Endothelial cell of umbilical vein (primary cell): ENCODE measurements at regions of chr6 and their contacts with region 1.

Region 1: GRCh38 chr6:75296811-75297779 is 12.5 kb upstream of the TMEM30A start:
- DNase-seq: peak; percentile 85
- H3K4me3 ChIP-seq: no peak overlapping the region
- H3K27ac ChIP-seq: no peak overlapping the region
- H3K4me1 ChIP-seq: no peaks in the 10 kb centered on the region
- H3K27me3 ChIP-seq: no peaks in the 10 kb centered on the region
- CTCF ChIP-seq: peak; percentile 25 to 35
- POLR2A ChIP-seq: no peak

Region 2: GRCh38 chr6:75266716-75267291 is 30.3 kb before region 1 on chr6:
- CTCF ChIA-PET with region 1: interaction called, 25 read pairs
- POLR2A ChIA-PET with region 1: no interaction called
- dilution Hi-C with region 1: no loop called
- intact Hi-C with region 1: loop called (anchors 1 kb)
- DNase-seq: peak; percentile 75
- H3K4me3 ChIP-seq: no peak overlapping the region
- H3K27ac ChIP-seq: no peak overlapping the region
- H3K4me1 ChIP-seq: peaks cover 19% of the 10 kb centered on the region
- H3K27me3 ChIP-seq: no peaks in the 10 kb centered on the region
- CTCF ChIP-seq: peak; percentile 58 to 59
- POLR2A ChIP-seq: no peak

Region 3: DNA sequence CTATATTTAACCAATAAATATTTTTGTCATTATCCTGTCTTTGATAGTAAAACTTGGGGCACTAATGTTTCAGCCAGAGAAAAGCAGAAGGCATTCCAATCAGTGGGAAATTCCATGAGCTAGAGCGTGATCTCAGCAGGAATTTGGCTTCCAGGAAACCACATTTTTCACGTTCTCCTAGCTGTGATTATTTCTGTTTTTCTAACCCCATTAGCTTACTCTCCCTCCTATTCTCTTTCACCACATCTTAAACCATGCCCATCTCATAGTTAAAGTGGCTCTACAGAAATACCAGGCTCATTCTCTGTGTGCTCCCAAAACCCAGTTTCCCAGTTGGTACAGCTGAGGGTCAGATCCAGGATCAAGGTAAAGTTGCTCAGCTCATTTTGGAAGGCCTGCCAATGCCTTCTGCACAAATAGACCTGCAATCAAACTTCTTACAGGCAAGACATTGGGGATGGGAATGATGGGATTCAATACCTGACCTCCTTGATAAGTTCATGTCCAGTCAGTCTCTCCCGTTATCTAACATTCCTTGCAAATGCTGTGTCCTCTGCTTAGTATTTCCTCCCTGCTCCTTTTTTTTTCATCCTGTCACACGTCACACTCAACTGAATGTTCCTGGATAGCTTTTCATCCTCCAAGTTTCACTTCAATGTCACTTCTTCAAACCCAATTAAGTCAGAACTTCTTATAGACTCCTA is 20.6 kb after region 1 on chr6:
- CTCF ChIA-PET with region 1: interaction called, 13 read pairs
- POLR2A ChIA-PET with region 1: no interaction called
- dilution Hi-C with region 1: no loop called
- intact Hi-C with region 1: no loop called
- DNase-seq: peak; percentile 71
- H3K4me3 ChIP-seq: no peak overlapping the region
- H3K27ac ChIP-seq: peak overlapping the region; percentile 13
- H3K4me1 ChIP-seq: peaks cover 10% of the 10 kb centered on the region
- H3K27me3 ChIP-seq: peaks cover 0 to 11% of the 10 kb centered on the region in 2 experiments
- CTCF ChIP-seq: no peak
- POLR2A ChIP-seq: no peak

Region 4: DNA sequence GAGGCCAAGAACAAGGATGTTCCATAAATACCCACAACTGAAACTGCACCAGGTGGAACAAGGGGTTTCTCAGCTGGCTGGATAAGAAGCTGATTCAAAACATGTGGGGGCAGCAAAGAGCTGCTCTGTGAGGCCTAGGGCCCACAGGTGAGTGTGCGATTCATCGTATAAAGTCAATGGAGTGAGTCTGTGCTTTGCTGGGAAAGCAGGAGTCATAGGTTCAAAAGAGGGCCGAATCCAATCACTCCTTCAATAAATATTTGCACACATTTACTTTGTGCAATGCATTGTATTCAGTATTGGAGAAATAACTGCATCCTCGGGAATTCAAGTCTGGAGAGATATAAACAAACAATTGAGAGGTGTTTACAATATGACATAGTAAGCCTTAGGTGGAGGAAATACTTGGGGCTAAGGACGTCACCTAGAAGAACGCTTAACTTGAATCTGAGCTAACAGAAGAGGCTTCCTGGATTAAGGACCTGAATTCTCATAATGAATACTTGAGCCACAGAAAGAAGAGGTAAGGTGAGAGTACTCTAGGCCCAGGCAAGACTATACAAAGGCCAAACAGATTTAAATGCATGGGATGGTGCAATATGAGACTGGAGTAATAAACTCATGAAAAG is 71.2 kb after region 1 on chr6:
- CTCF ChIA-PET with region 1: interaction called, 9 read pairs
- POLR2A ChIA-PET with region 1: no interaction called
- dilution Hi-C with region 1: no loop called
- intact Hi-C with region 1: loop called (anchors 1 kb)
- DNase-seq: peak; percentile 78
- H3K4me3 ChIP-seq: no peak overlapping the region
- H3K27ac ChIP-seq: no peak overlapping the region
- H3K4me1 ChIP-seq: no peaks in the 10 kb centered on the region
- H3K27me3 ChIP-seq: no peaks in the 10 kb centered on the region
- CTCF ChIP-seq: peak; percentile 37 to 57
- POLR2A ChIP-seq: no peak

Region 5: GRCh38 chr6:75484535-75484934 is 187.4 kb after region 1 on chr6:
- CTCF ChIA-PET with region 1: interaction called, 4 read pairs
- POLR2A ChIA-PET with region 1: no interaction called
- dilution Hi-C with region 1: no loop called
- intact Hi-C with region 1: loop called (anchors 5 kb)
- DNase-seq: no peak
- H3K4me3 ChIP-seq: no peak overlapping the region
- H3K27ac ChIP-seq: no peak overlapping the region
- H3K4me1 ChIP-seq: peaks cover 36% of the 10 kb centered on the region
- H3K27me3 ChIP-seq: no peaks in the 10 kb centered on the region
- CTCF ChIP-seq: no peak
- POLR2A ChIP-seq: no peak

Region 6: GRCh38 chr6:75526502-75527127 is 229.5 kb after region 1 on chr6:
- CTCF ChIA-PET with region 1: interaction called, 51 read pairs
- POLR2A ChIA-PET with region 1: no interaction called
- dilution Hi-C with region 1: loop called (anchors 25 kb)
- intact Hi-C with region 1: loop called (anchors 1 kb)
- DNase-seq: peak; percentile 87
- H3K4me3 ChIP-seq: no peak overlapping the region
- H3K27ac ChIP-seq: no peak overlapping the region
- H3K4me1 ChIP-seq: peaks cover 14% of the 10 kb centered on the region
- H3K27me3 ChIP-seq: peaks cover 2 to 3% of the 10 kb centered on the region in 2 experiments
- CTCF ChIP-seq: peak; percentile 48 to 54
- POLR2A ChIP-seq: no peak